ENCODE measurements at regions of chr1 and their contacts with region 1.

Region 1: GRCh38 chr1:19559641-19560040 is 74.3 kb upstream of the CAPZB start:
- DNase-seq: no peak
- H3K4me3 ChIP-seq: no peak overlapping the region
- H3K27ac ChIP-seq: no peak overlapping the region
- H3K4me1 ChIP-seq: no peaks in the 10 kb centered on the region
- H3K27me3 ChIP-seq: peaks cover 2 to 11% of the 10 kb centered on the region in 2 experiments
- CTCF ChIP-seq: no peak
- POLR2A ChIP-seq: no peak

Region 2: GRCh38 chr1:19232526-19232851 is 327.2 kb before region 1 on chr1:
- CTCF ChIA-PET with region 1: no interaction called
- POLR2A ChIA-PET with region 1: no interaction called
- dilution Hi-C with region 1: no loop called
- intact Hi-C with region 1: no loop called
- DNase-seq: no peak
- H3K4me3 ChIP-seq: no peak overlapping the region
- H3K27ac ChIP-seq: no peak overlapping the region
- H3K4me1 ChIP-seq: no peaks in the 10 kb centered on the region
- H3K27me3 ChIP-seq: no peaks in the 10 kb centered on the region
- CTCF ChIP-seq: no peak
- POLR2A ChIP-seq: no peak

Region 3: GRCh38 chr1:19521411-19521810 is 38.2 kb before region 1 on chr1:
- CTCF ChIA-PET with region 1: interaction called, 4 read pairs
- POLR2A ChIA-PET with region 1: no interaction called
- dilution Hi-C with region 1: no loop called
- intact Hi-C with region 1: loop called (anchors 5 kb)
- DNase-seq: no peak
- H3K4me3 ChIP-seq: no peak overlapping the region
- H3K27ac ChIP-seq: no peak overlapping the region
- H3K4me1 ChIP-seq: no peaks in the 10 kb centered on the region
- H3K27me3 ChIP-seq: peaks cover 2 to 3% of the 10 kb centered on the region in 2 experiments
- CTCF ChIP-seq: no peak
- POLR2A ChIP-seq: no peak